Activated CD4-positive, alpha-beta T cell treated with anti-CD3 and anti-CD28 coated beads, Interleukin-2, amount 10 ng/mL, durations not matched to agents 24 days and 14 days (primary cell): ENCODE measurements at regions of chr3 and their contacts with region 1.

Region 1: DNA sequence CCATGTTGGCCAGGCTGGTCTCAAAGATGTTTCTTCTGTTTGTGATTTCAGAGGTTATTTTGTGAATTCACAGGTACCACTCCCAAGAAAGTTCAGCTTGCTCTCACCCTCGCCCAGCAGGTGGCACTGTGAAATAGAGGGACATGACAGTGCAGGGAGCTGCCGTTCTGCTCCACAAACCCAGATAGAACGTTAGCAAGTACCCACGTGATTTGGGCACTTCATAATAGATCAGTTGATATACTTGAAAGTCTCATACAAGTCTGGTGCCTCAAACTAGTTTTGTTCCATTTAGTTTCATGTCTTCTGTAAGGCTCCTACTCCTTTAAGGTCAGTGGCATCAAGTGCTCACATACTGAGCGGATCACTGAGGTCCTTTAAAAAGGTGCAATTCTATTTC is 45.5 kb downstream of the FILIP1L start:
- DNase-seq: peak; percentile 94
- H3K4me3 Mint-ChIP-seq: no peak overlapping the region
- H3K27ac Mint-ChIP-seq: no peak overlapping the region
- H3K4me1 Mint-ChIP-seq: peaks cover 40% of the 10 kb centered on the region
- H3K27me3 Mint-ChIP-seq: no peaks in the 10 kb centered on the region

Region 2: GRCh38 chr3:99842826-99843589 is 225.8 kb before region 1 on chr3:
- intact Hi-C with region 1: loop called (anchors 2 kb)
- DNase-seq: no peak
- H3K4me3 Mint-ChIP-seq: no peak overlapping the region
- H3K27ac Mint-ChIP-seq: peak overlapping the region; percentile 49
- H3K4me1 Mint-ChIP-seq: peaks cover 18% of the 10 kb centered on the region
- H3K27me3 Mint-ChIP-seq: no peaks in the 10 kb centered on the region

Region 3: GRCh38 chr3:100047455-100048141 is 21.2 kb before region 1 on chr3:
- intact Hi-C with region 1: no loop called
- DNase-seq: no peak
- H3K4me3 Mint-ChIP-seq: no peak overlapping the region
- H3K27ac Mint-ChIP-seq: no peak overlapping the region
- H3K4me1 Mint-ChIP-seq: peaks cover 9% of the 10 kb centered on the region
- H3K27me3 Mint-ChIP-seq: peaks cover 1% of the 10 kb centered on the region

Region 4: GRCh38 chr3:100254168-100254777 is 185.4 kb after region 1 on chr3:
- intact Hi-C with region 1: loop called (anchors 1 kb)
- DNase-seq: peak; percentile 86
- H3K4me3 Mint-ChIP-seq: no peak overlapping the region
- H3K27ac Mint-ChIP-seq: no peak overlapping the region
- H3K4me1 Mint-ChIP-seq: peaks cover 4% of the 10 kb centered on the region
- H3K27me3 Mint-ChIP-seq: no peaks in the 10 kb centered on the region

Region 5: DNA sequence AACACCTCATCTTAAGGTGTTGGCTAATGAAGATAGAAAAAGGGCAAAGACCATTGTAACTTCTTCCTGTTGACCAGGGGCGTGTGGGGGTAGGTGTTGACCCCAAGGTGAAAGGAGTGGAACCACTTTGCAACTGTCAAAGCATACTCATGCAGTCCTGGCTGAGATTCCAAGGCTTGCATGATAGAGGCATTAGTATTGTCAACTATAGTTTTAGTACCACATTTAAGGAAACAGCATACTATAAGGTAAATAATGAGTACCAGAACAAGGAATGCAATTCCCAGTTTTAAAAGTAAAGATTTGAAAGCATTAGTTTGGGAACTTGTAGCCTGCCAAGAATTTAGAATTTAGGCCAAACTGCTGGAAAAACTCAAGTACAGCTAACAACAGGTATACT is 512.8 kb after region 1 on chr3:
- intact Hi-C with region 1: loop called (anchors 10 kb)
- DNase-seq: no peak
- H3K4me3 Mint-ChIP-seq: no peak overlapping the region
- H3K27ac Mint-ChIP-seq: no peak overlapping the region
- H3K4me1 Mint-ChIP-seq: no peaks in the 10 kb centered on the region
- H3K27me3 Mint-ChIP-seq: peaks cover 8% of the 10 kb centered on the region